ENCODE measurements at regions of chr10 and their contacts with region 1.

Region 1: DNA sequence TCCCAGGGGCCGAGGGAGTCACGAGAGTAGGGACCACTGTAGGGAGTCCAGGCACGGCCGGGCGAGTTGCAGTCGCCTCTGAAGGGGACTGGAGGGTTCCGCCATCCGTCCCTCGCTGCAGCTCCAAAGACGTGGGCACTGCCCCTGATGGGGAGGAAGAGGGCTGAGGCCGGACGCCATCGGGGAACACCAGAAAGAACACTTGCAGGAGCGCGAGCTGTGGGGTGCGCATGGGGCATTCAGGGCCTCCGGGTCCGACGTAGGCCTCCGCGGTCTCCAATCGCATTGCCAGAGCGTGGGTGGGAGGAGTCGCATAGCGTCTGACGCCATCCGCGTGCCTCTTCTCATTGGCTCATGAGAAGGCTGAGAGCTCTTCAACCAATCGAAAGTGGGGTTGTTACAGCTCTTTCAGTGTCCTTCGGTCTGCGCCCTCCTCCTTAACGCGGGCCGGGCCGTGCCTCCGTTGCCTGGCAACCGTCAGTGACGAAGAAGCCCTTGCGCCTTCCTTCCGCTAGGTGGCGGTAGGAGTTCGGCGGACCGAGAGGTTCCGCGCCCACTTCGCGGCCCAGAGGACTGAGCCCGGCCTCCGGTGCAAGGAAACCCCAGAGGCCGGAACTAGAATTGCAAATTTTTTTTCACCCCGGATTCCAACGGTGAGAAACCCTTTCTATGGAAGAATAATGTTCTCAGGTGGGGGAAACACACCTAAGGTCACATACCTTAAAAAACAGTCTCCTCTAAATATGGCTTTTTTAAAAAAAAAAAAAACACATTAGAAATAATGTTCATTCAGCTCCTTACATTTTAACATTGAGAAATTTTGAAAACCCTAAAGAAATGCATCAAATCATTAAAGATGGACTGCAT is at the start of gene TCTN3:
- DNase-seq: peak; percentile 92 to 99 (median 98)
- H3K4me3 ChIP-seq: peak within 1 kb of the TSS; percentile 53 to 99 (median 89)
- H3K27ac ChIP-seq: peak within 1 kb of the TSS in 47 of 59 donors; percentile 12 to 88 (median 60)
- H3K27me3 ChIP-seq: no peaks in the 10 kb centered on the region
- CTCF ChIP-seq: peak; percentile 97 to 100 (median 100)
- total RNA-seq, gene TCTN3: 11.0 to 27.6 (median 18.5) TPM

Region 2: GRCh38 chr10:95601116-95601719 is 92.7 kb before region 1 on chr10:
- intact Hi-C with region 1: no loop called
- DNase-seq: peak; percentile 47 to 86 (median 74)
- H3K4me3 ChIP-seq: no peak overlapping the region
- H3K27ac ChIP-seq: peak overlapping the region in 1 of 59 donors; percentile 5
- H3K27me3 ChIP-seq: peaks cover 0 to 8% (median 0%) of the 10 kb centered on the region in 45 donors
- CTCF ChIP-seq: peak; percentile 82 to 99 (median 95)

Region 3: GRCh38 chr10:95716466-95717224 is 22.7 kb after region 1 on chr10:
- intact Hi-C with region 1: no loop called
- DNase-seq: no peak
- H3K4me3 ChIP-seq: no peak overlapping the region
- H3K27ac ChIP-seq: no peak overlapping the region
- H3K27me3 ChIP-seq: no peaks in the 10 kb centered on the region
- CTCF ChIP-seq: no peak

Region 4: DNA sequence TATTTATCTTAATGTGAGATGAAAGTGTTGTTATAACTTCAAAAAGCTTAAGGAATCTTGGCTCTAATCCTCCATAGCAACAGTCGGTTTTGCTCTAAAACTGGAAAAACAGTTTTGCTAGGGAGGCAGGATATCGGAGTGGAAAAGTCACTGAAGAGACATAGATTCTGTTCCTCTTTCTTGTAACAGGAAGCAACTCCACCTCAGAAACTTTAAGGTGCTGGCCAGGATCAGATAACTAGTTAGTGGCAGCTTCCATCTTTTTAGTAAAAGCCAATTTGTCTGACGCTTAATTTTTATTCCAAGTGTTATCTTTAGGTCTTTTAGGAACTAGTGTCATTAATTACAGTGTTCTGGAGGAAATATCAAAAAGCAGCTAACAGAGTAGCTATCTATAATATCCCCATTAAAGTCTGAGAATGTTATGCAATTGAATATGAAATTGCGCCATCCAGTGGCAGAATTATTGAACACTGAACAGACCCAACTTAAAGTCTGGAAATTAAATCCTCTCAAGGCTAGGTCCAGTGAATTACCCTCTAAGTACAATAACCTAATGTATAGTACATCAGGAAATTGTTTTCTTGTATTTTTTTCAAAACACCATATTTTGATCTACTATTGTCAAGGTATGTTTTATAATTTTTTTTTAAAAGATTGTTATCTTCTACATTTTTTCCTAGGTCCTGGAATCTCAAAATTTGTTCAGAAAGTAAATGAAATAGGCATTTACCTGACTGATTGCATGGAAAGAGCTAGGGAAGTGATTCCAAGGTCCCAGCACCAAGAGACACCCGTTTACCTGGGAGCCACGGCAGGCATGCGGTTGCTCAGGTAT is 148.0 kb after region 1 on chr10:
- intact Hi-C with region 1: loop called (anchors 5 kb)
- DNase-seq: no peak
- H3K4me3 ChIP-seq: no peak overlapping the region
- H3K27ac ChIP-seq: peak overlapping the region in 28 of 59 donors; percentile 0 to 61 (median 30)
- H3K27me3 ChIP-seq: no peaks in the 10 kb centered on the region
- CTCF ChIP-seq: peak; percentile 54 to 81 (median 70)

Region 5: DNA sequence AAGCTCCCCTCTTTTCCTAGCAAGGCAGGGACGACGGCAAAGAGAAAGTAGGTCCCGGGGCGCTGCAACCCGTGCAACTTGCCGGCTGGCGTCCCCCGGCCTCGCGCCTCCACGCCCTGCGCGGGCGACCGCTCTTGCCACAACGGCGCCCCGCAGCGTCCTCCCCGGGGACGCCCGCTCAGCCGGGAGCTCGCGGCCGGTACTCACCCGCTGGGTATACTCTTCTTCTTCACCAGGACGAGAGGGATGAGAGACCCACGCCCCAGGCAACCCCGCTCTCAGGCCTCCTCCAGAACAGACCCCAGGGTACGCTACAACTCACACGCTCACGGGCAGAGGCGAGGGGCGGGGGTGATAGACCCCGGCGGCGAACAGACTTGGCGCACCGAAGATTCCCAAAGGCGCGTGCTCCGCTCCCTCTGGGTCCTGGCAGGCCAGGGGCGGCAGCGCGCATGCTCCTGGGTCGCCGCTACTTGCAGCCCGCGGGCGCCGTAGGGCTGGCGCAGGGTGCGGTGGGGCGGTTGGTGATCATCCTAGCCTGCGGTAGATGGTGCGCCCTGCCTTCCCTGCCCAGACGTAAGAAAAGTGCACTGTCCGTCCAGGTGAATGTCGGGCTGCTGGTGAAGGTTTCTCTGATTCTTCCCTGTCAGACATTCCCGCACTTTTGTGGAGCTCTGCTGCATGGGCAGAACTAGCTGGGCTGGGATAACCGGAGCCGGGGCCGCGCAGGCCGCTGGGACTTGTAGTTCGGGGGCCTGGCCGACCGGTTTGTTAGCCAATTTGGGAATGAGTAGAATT is 213.8 kb after region 1 on chr10 and contains the start of gene CC2D2B:
- intact Hi-C with region 1: loop called in 1 of 2 experiments (anchors 5 kb)
- DNase-seq: peak; percentile 78 to 91 (median 86)
- H3K4me3 ChIP-seq: peak within 1 kb of the TSS; percentile 60 to 90 (median 79)
- H3K27ac ChIP-seq: peak within 1 kb of the TSS; percentile 10 to 93 (median 83)
- H3K27me3 ChIP-seq: no peaks in the 10 kb centered on the region
- CTCF ChIP-seq: peak in 32 of 56 donors; percentile 3 to 51 (median 21)
- total RNA-seq, gene CC2D2B: 1.1 to 10.2 (median 4.1) TPM

Region 6: GRCh38 chr10:96043033-96043932 is 349.4 kb after region 1 on chr10 and contains the start of gene CCNJ:
- intact Hi-C with region 1: loop called in 1 of 2 experiments (anchors 10 kb)
- DNase-seq: peak; percentile 65 to 91 (median 83)
- H3K4me3 ChIP-seq: peak within 1 kb of the TSS; percentile 59 to 94 (median 85)
- H3K27ac ChIP-seq: peak within 1 kb of the TSS in 58 of 59 donors; percentile 2 to 92 (median 78)
- H3K27me3 ChIP-seq: no peaks in the 10 kb centered on the region
- CTCF ChIP-seq: peak in 49 of 56 donors; percentile 6 to 62 (median 40)
- total RNA-seq, gene CCNJ: 1.8 to 5.2 (median 3.5) TPM

Region 7: GRCh38 chr10:96292971-96293920 is 599.3 kb after region 1 on chr10:
- intact Hi-C with region 1: loop called in 1 of 2 experiments (anchors 5 kb)
- DNase-seq: no peak
- H3K4me3 ChIP-seq: no peak overlapping the region
- H3K27ac ChIP-seq: no peak overlapping the region
- H3K27me3 ChIP-seq: peaks cover 0 to 20% (median 0%) of the 10 kb centered on the region in 45 donors
- CTCF ChIP-seq: peak; percentile 41 to 88 (median 65)